AG04449 (cell line): ENCODE measurements at regions of chr1 and their contacts with region 1.

Region 1: DNA sequence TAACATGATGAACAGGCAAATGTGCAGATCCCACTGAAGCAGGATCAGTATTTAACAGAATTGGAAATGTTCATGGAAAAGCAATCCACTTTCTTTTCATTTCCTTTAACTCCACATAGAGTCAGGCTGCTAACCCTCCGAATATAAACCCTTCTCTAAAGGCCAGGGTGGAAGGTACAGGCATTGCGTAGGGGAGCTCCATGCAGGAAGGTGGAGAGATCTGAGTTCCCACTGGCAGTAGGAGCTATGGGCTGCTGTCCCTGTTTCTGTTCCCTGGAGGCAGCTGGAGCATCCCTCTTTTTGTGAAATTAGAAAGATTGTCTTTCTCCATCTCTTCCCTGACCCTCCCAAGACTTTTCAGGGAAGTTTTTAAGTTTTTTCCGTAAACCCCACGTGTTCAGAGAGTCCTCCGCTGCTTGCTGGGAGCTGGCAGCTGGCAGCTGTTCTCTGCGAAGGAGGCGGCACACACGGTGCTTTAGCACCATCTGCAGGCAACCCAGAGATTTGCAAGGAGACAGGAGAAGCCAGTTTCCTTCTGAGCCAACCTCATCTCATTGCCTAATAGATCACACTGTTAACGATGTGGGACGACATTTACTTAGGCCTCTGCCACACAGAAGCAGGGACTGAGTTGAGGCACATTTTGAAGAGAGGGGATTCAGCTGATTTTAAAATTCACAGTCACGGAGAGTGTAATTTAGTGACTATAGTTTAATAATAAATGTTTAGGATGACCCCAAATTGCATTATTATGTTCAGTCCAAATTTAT is 55.4 kb upstream of the HOOK1 start:
- DNase-seq: peak; percentile 29
- H3K4me3 ChIP-seq: no peak overlapping the region
- CTCF ChIP-seq: peak; percentile 90

Region 2: GRCh38 chr1:58739856-58740466 is 1019.4 kb before region 1 on chr1:
- CTCF ChIA-PET with region 1: interaction called, 15 read pairs
- POLR2A ChIA-PET with region 1: no interaction called
- DNase-seq: no peak
- H3K4me3 ChIP-seq: no peak overlapping the region
- CTCF ChIP-seq: peak; percentile 32

Region 3: DNA sequence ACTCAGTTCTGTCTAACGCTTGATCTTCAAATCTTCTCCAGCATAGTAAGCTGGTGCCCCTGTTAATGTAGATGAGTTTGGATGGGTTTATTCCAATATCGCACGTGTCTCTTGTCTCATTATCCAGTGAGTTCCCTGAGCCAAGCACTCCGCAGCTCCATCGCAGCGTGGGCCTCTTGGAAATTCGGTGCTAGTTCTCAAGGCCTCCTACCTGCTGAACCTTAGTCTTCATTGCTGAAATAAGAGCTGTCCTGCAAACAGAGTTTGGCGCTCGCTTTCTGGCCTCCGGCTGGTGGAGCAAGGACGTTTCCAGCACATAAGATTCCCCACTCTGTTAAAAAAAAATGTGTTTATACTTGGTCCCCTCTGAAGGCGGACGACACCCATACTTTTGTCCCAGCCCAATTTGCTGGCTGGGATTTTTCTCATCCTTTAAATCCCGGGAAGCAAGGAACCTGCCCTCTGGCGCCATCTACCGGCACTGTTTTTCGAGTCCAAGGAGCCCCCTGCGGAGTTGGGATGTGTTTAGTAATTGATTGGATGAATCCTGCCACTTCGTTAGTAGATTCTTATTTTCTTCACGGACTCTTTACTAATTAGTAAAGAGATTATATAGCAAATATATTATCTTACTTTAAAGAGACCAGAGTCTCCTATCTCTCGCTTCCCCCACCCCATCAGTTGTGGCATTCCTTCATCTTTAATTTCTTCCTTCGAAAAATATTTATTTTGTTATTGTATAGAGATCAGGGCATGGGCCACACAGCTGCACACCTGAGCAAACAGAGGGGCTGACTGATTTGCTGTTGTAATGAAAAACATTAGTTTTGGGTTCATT is 990.2 kb before region 1 on chr1:
- CTCF ChIA-PET with region 1: interaction called, 10 read pairs
- POLR2A ChIA-PET with region 1: no interaction called
- DNase-seq: no peak
- H3K4me3 ChIP-seq: no peak overlapping the region
- CTCF ChIP-seq: peak; percentile 76

Region 4: DNA sequence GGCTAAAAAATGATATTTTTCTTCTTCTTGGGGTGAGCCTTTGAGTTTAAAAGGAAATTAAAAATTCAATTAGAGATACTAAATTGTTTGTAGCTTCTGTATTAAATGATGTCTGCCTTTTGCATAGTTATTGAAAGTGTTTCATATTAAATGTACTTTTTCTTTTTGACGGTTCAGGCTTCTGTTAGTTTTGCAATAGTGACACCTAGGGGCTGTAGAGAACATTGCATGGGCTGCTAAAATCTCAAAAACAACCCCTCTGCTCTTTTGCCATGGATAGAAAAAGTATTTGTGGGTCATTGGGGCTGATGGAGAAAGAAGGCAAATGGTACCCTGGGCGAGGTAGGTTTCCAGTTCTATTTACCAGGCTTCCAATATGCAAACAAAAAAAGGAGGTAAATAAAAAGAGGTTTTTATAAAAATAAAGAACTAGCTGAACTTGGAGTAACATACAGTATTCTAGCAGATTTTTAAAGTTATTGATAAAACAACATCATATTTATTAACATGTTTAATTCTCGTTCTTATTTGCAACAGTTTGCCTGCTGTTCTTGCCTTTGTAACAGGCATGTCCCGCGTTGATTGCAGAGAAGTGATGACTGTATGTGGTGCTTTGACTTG is 60.0 kb before region 1 on chr1:
- CTCF ChIA-PET with region 1: interaction called, 50 read pairs
- POLR2A ChIA-PET with region 1: no interaction called
- DNase-seq: no peak
- H3K4me3 ChIP-seq: no peak overlapping the region
- CTCF ChIP-seq: peak; percentile 75

Region 5: GRCh38 chr1:59707178-59707791 is 52.1 kb before region 1 on chr1:
- CTCF ChIA-PET with region 1: interaction called, 50 read pairs
- POLR2A ChIA-PET with region 1: no interaction called
- DNase-seq: peak; percentile 85
- H3K4me3 ChIP-seq: no peak overlapping the region
- CTCF ChIP-seq: no peak

Region 6: DNA sequence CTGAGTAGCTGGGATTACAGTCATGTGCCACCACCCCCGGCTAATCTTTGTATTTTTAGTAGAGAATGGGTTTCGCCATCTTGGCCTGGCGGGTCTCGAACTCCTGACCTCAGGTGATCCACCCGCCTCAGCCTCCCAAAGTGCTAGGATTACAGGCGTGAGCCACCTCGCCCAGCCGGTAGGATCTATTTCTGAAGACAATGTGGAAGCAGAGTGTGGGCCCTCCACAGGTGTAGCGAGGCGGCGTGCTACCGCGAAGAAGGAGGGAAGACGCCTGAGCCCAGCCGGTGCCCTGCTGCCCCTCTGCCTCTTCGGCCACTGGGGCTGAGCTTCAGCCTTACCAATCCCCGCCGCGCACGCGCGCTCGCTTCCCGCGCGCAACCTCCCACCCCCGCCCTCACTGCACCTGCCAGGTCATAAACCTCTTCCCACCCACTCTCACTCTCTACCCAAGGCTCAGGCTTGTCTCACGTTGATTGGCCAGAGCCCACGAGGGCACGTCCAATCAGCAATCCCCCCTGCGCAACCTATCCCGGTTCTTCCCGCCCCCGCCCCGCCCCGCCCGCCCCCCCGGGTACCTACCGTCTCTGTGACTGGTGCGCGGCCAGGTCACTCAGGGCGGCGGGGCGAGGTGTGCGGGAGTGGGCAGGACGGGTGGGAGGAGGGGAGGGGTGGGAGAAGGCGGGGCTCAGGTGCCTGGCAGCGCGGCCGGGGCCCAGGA is 55.0 kb after region 1 on chr1:
- CTCF ChIA-PET with region 1: no interaction called
- POLR2A ChIA-PET with region 1: no interaction called
- DNase-seq: no peak
- H3K4me3 ChIP-seq: no peak overlapping the region
- CTCF ChIP-seq: no peak

Region 7: DNA sequence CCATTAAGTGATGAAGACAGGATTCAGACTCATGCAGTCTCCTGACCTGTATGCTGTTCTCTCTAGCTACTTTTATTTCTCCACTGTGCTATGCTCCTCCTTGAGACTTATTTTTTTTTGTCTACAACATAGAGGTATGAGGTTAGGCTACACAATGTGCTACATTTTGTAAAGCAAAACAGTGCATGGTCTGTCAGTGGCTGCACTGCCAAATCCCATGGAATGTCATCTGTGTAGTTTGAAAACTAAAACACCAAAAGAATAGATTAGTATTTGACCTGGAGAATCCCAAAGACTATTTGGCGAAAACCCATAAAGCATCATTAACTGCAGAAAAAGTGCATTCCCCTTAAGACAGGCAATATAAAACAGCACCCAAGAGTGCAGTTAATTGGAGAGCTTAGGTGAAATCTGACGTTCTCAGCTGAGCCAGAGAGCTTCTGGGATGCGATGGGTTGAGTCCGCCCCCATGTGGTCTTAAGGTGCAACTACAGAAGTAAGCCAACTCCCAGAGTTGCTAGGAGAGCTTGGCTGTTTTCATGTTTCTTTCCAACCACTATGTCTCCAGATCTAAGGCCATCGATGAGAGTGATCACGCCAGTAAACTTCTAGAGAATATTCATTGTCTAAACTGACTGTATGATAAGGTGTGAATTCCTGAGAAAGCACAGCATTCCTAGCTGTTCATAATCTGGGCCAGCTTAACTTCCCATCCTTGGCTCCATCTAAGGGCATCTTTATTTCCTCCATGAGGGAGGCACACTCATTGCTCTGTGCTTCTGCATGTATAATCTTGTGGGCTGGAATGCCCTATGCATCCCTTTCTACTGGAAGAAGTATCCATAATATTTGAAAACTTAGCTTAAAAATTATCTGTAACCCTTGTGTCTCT is 188.0 kb after region 1 on chr1:
- CTCF ChIA-PET with region 1: interaction called, 17 read pairs
- POLR2A ChIA-PET with region 1: no interaction called
- DNase-seq: peak; percentile 9
- H3K4me3 ChIP-seq: no peak overlapping the region
- CTCF ChIP-seq: peak; percentile 96